Caco-2 (cell line): ENCODE measurements at regions of chr12 and their contacts with region 1.

Region 1: DNA sequence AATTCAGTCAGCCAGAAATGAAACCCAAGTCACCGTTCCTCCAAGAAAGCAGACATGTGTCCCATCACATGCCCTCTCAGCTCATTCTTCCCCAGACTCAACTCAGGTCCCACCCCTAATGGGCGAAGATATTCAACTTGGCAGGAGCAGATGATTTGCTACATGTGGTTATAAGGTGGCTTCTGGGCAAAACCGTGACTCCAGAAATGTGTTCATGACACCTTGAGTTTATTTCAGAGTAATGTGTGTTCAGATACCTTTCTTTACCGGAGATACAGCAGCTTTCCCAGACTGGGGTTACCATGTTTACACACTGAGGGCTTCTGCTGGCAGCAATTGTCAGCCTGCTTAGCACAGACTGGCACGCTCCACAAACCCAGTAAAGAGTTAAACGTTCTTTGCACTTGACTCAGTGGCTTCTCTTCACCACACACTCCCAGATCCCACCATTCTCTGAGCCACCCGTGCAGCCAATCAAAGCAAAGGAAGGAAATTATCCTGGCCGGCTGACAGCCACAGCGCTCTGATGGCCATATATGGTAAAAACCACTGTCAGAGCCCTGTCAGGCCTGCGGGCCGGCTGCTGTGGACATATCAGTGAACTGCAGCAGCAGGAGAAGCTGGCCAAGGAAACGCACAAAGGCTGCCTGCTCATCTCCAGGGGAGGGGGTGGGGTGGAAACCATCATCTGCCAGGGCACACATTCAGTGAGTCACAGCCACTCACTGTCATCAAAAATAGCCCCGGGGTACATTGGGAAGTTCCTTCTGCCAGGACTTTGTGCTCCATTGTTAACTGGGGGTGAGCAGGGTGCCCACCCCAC is 39.9 kb downstream of the CORO1C start:
- DNase-seq: peak; percentile 89 to 94
- H3K4me3 ChIP-seq: 0 out of 2 replicates have a peak overlapping the region, but pooled peaks have one; percentile 7
- H3K4me3 Mint-ChIP-seq: peak overlapping the region; percentile 60
- H3K27ac Mint-ChIP-seq: peak overlapping the region; percentile 89
- H3K4me1 ChIP-seq: peaks cover 36% of the 10 kb centered on the region
- H3K4me1 Mint-ChIP-seq: peaks cover 41% of the 10 kb centered on the region
- H3K27me3 ChIP-seq: no peaks in the 10 kb centered on the region
- H3K27me3 Mint-ChIP-seq: no peaks in the 10 kb centered on the region
- CTCF ChIP-seq: peak; percentile 31 to 38

Region 2: GRCh38 chr12:108514973-108515814 is 176.2 kb before region 1 on chr12 and contains the start of gene FICD:
- CTCF ChIA-PET with region 1: no interaction called
- POLR2A ChIA-PET with region 1: no interaction called
- intact Hi-C with region 1: no loop called
- DNase-seq: peak; percentile 99
- H3K4me3 ChIP-seq: peak within 1 kb of the TSS; percentile 77
- H3K4me3 Mint-ChIP-seq: peak within 1 kb of the TSS; percentile 82
- H3K27ac Mint-ChIP-seq: peak within 1 kb of the TSS; percentile 89
- H3K4me1 ChIP-seq: no peaks in the 10 kb centered on the region
- H3K4me1 Mint-ChIP-seq: peaks cover 18% of the 10 kb centered on the region
- H3K27me3 ChIP-seq: no peaks in the 10 kb centered on the region
- H3K27me3 Mint-ChIP-seq: peaks cover 2% of the 10 kb centered on the region
- CTCF ChIP-seq: no peak
- total RNA-seq, gene FICD: 2.8 and 3.6 TPM in 2 replicates

Region 3: GRCh38 chr12:108589028-108589839 is 102.2 kb before region 1 on chr12:
- CTCF ChIA-PET with region 1: no interaction called
- POLR2A ChIA-PET with region 1: no interaction called
- intact Hi-C with region 1: no loop called
- DNase-seq: no peak
- H3K4me3 ChIP-seq: no peak overlapping the region
- H3K4me3 Mint-ChIP-seq: no peak overlapping the region
- H3K27ac Mint-ChIP-seq: no peak overlapping the region
- H3K4me1 ChIP-seq: no peaks in the 10 kb centered on the region
- H3K4me1 Mint-ChIP-seq: no peaks in the 10 kb centered on the region
- H3K27me3 ChIP-seq: no peaks in the 10 kb centered on the region
- H3K27me3 Mint-ChIP-seq: peaks cover 4% of the 10 kb centered on the region
- CTCF ChIP-seq: no peak

Region 4: GRCh38 chr12:108664338-108665258 is 26.8 kb before region 1 on chr12:
- CTCF ChIA-PET with region 1: interaction called, 5 read pairs
- POLR2A ChIA-PET with region 1: interaction called, 3 read pairs
- intact Hi-C with region 1: loop called (anchors 1 kb)
- DNase-seq: peak; percentile 84 to 90
- H3K4me3 ChIP-seq: no peak overlapping the region
- H3K4me3 Mint-ChIP-seq: no peak overlapping the region
- H3K27ac Mint-ChIP-seq: no peak overlapping the region
- H3K4me1 ChIP-seq: peaks cover 6% of the 10 kb centered on the region; the same call in 1 of the 2 replicates
- H3K4me1 Mint-ChIP-seq: peaks cover 11% of the 10 kb centered on the region
- H3K27me3 ChIP-seq: no peaks in the 10 kb centered on the region
- H3K27me3 Mint-ChIP-seq: no peaks in the 10 kb centered on the region
- CTCF ChIP-seq: peak; percentile 86 to 88

Region 5: DNA sequence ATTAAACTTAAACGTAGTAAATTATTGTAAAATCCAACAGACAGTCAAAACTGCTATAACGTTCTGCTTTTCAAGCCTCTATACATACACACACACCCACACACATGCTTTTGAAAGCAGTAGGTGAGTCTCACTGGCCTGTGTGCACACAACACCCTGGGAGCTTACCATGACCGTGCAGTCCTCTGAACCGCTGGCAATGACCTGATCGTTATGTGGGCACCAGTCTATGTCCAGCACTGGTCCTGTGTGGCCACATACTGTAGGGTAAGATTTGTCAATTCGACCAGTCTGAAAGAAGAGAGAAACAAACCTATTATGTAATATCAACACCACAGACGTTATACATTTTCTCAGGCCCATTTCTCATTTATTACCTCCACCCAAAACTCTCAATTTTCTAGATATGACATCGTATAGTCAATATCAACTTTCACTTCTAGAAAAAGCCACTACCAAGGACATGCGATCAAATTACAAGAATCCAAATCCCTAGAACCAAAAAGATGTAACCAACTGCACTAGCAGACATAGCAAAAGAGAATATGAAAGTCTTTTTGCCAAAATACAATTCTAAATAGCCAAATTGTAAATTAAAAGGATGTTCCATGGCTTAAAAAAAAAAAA is 13.2 kb before region 1 on chr12:
- CTCF ChIA-PET with region 1: no interaction called
- POLR2A ChIA-PET with region 1: no interaction called
- intact Hi-C with region 1: no loop called
- DNase-seq: no peak
- H3K4me3 ChIP-seq: no peak overlapping the region
- H3K4me3 Mint-ChIP-seq: no peak overlapping the region
- H3K27ac Mint-ChIP-seq: no peak overlapping the region
- H3K4me1 ChIP-seq: peaks cover 6% of the 10 kb centered on the region
- H3K4me1 Mint-ChIP-seq: peaks cover 28% of the 10 kb centered on the region
- H3K27me3 ChIP-seq: no peaks in the 10 kb centered on the region
- H3K27me3 Mint-ChIP-seq: no peaks in the 10 kb centered on the region
- CTCF ChIP-seq: no peak

Region 6: GRCh38 chr12:108701779-108702441 is 10.5 kb after region 1 on chr12:
- CTCF ChIA-PET with region 1: no interaction called
- POLR2A ChIA-PET with region 1: interaction called, 5 read pairs
- intact Hi-C with region 1: loop called (anchors 1 kb)
- DNase-seq: peak; percentile 43 to 65
- H3K4me3 ChIP-seq: no peak overlapping the region
- H3K4me3 Mint-ChIP-seq: peak overlapping the region; percentile 1
- H3K27ac Mint-ChIP-seq: peak overlapping the region; percentile 74
- H3K4me1 ChIP-seq: peaks cover 26% of the 10 kb centered on the region
- H3K4me1 Mint-ChIP-seq: peaks cover 41% of the 10 kb centered on the region
- H3K27me3 ChIP-seq: no peaks in the 10 kb centered on the region
- H3K27me3 Mint-ChIP-seq: no peaks in the 10 kb centered on the region
- CTCF ChIP-seq: no peak

Region 7: GRCh38 chr12:108826101-108826806 is 134.9 kb after region 1 on chr12:
- CTCF ChIA-PET with region 1: no interaction called
- POLR2A ChIA-PET with region 1: no interaction called
- intact Hi-C with region 1: no loop called
- DNase-seq: no peak
- H3K4me3 ChIP-seq: no peak overlapping the region
- H3K4me3 Mint-ChIP-seq: no peak overlapping the region
- H3K27ac Mint-ChIP-seq: peak overlapping the region; percentile 45
- H3K4me1 ChIP-seq: peaks cover 20% of the 10 kb centered on the region
- H3K4me1 Mint-ChIP-seq: peaks cover 7% of the 10 kb centered on the region
- H3K27me3 ChIP-seq: no peaks in the 10 kb centered on the region
- H3K27me3 Mint-ChIP-seq: no peaks in the 10 kb centered on the region
- CTCF ChIP-seq: no peak